ENCODE measurements at regions of chr2 and their contacts with region 1.

Region 1: GRCh38 chr2:74833418-74834233 is at the start of gene HK2:
- DNase-seq: peak; percentile 68 to 87 (median 78)
- ATAC-seq: peak; percentile 91
- H3K4me3 ChIP-seq: peak within 1 kb of the TSS; percentile 72
- H3K4me3 Mint-ChIP-seq: peak within 1 kb of the TSS; percentile 89 to 97 (median 94)
- H3K27ac ChIP-seq: peak within 1 kb of the TSS; percentile 67
- H3K27ac Mint-ChIP-seq: peak within 1 kb of the TSS; percentile 35 to 95 (median 91)
- H3K4me1 ChIP-seq: peaks cover 14 to 32% of the 10 kb centered on the region in 2 donors
- H3K4me1 Mint-ChIP-seq: peaks cover 28 to 49% (median 33%) of the 10 kb centered on the region in 7 donors
- H3K27me3 ChIP-seq: no peaks in the 10 kb centered on the region
- H3K27me3 Mint-ChIP-seq: peaks cover 0 to 7% (median 0%) of the 10 kb centered on the region in 5 donors
- total RNA-seq, gene HK2: 11.1 to 74.6 (median 17.7) TPM

Region 2: DNA sequence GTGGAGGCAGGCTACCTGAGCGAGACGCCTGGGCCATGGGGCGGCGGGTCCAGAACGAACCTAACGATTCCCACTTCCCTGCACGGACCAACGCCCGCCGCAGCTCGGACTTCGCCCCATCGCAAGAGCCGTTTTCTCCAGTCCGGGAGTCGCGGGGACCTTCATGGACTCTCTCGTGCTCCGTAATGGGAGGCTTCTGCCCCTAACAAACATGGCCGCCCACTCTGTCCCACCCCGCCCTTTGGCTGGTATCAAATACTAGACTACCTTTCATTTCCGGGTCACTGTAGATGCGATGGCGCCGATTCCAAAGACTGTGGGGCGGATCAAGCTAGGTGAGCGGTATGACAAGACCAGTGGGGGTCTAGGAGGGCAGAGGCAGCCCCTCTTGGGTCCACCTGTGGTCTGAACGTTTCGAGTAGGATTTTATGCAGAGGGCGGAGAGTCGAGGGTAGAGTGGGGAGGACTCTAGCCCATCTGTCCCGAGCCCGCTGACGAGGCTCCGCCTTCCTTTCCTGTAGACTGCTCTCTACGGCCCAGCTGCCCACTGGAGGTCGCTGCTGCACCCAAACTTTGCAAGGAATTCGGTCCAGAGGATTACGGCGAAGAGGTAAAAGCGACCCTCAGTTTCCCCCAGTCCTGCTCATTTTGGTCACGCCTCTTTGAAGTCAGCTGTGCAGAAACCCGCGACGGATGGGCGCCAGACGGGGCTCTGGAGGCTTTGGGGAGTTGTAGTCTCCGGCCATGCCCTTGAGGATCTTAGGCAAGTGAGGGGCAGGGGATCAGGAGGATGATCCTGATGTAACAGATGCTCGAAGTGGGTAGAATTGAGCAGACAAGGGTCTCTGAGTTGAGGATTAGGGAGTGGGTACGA is 350.6 kb before region 1 on chr2 and contains the starts of genes CCDC142 and TTC31:
- CTCF ChIA-PET with region 1: no interaction called
- POLR2A ChIA-PET with region 1: no interaction called
- intact Hi-C with region 1: loop called in 1 of 2 experiments (anchors 1 kb)
- DNase-seq: peak; percentile 76 to 96 (median 96)
- ATAC-seq: peak; percentile 96
- H3K4me3 ChIP-seq: peak within 1 kb of the TSS; percentile 99
- H3K4me3 Mint-ChIP-seq: peak within 1 kb of the TSS; percentile 91 to 100 (median 98)
- H3K27ac ChIP-seq: peak within 1 kb of the TSS; percentile 85
- H3K27ac Mint-ChIP-seq: peak within 1 kb of the TSS; percentile 93 to 100 (median 99)
- H3K4me1 ChIP-seq: peaks cover 22 to 26% of the 10 kb centered on the region in 2 donors
- H3K4me1 Mint-ChIP-seq: peaks cover 21 to 59% (median 41%) of the 10 kb centered on the region in 7 donors
- H3K27me3 ChIP-seq: no peaks in the 10 kb centered on the region
- H3K27me3 Mint-ChIP-seq: no peaks in the 10 kb centered on the region
- total RNA-seq, gene CCDC142: 21.4 to 75.2 (median 33.8) TPM
- total RNA-seq, gene TTC31: 35.5 to 50.4 (median 43.6) TPM

Region 3: DNA sequence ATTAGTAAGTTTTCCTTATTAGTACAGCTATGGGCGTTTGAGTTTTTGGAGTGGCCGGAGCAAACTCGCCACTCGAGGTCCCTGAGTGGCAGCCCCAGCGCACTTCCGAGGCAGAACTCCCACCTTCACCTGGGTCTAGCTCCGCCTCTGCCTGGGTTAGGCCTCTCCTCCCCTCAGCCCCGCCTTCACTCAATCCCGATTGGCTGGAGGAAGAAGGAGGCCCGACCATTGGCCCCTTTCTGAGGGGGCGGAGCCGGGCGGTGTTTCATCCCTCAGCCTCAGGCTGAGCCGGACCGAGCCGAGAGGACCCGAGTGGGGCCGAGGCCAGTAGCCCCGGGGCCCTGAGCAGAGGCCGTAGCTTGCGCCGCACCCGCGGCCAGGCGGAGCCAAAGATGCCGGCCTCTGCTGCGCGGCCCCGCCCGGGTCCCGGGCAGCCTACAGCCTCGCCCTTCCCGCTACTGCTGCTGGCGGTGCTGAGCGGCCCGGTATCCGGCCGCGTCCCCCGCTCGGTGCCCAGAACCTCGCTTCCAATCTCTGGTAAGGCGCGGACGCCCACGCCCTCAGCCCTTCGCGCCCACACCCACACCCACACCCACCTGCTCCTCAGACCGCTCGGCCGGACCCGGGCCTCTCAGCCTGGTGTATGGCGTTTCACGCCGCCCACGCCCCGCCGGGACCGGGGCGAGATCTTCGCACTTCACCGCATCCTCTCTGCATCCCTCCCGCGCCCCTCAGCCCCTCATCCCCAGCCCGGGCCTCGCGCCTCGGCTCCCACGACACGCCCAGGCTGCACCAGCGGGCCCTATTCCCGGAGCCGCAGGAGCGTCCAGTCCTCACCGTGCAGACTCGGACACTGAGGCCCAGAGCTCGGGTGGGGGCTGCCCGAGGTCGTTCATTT is 179.4 kb before region 1 on chr2 and contains the start of gene SEMA4F:
- CTCF ChIA-PET with region 1: no interaction called
- POLR2A ChIA-PET with region 1: interaction called, 4 read pairs
- intact Hi-C with region 1: loop called (anchors 5 kb)
- DNase-seq: peak; percentile 85 to 95 (median 92)
- ATAC-seq: peak; percentile 100
- H3K4me3 ChIP-seq: peak within 1 kb of the TSS; percentile 86
- H3K4me3 Mint-ChIP-seq: peak within 1 kb of the TSS; percentile 82 to 97 (median 90)
- H3K27ac ChIP-seq: peak within 1 kb of the TSS; percentile 75
- H3K27ac Mint-ChIP-seq: peak within 1 kb of the TSS in 8 of 9 donors; percentile 59 to 96 (median 85)
- H3K4me1 ChIP-seq: peaks cover 6 to 8% of the 10 kb centered on the region in 2 donors
- H3K4me1 Mint-ChIP-seq: peaks cover 12 to 34% (median 23%) of the 10 kb centered on the region in 7 donors
- H3K27me3 ChIP-seq: no peaks in the 10 kb centered on the region
- H3K27me3 Mint-ChIP-seq: peaks cover 3 to 21% (median 5%) of the 10 kb centered on the region in 5 donors
- total RNA-seq, gene SEMA4F: 5.7 to 23.6 (median 11.0) TPM

Region 4: GRCh38 chr2:74715078-74715791 is 118.4 kb before region 1 on chr2:
- CTCF ChIA-PET with region 1: interaction called, 18 read pairs
- POLR2A ChIA-PET with region 1: interaction called, 4 read pairs
- intact Hi-C with region 1: loop called (anchors 1 kb)
- DNase-seq: peak; percentile 61 to 84 (median 75)
- ATAC-seq: peak; percentile 94
- H3K4me3 ChIP-seq: peak overlapping the region; percentile 52
- H3K4me3 Mint-ChIP-seq: peak overlapping the region; percentile 82 to 98 (median 90)
- H3K27ac ChIP-seq: no peak overlapping the region
- H3K27ac Mint-ChIP-seq: peak overlapping the region in 5 of 9 donors; percentile 3 to 68 (median 21)
- H3K4me1 ChIP-seq: no peaks in the 10 kb centered on the region
- H3K4me1 Mint-ChIP-seq: peaks cover 4 to 10% (median 8%) of the 10 kb centered on the region in 7 donors
- H3K27me3 ChIP-seq: peaks cover 0 to 8% of the 10 kb centered on the region in 2 donors
- H3K27me3 Mint-ChIP-seq: peaks cover 0 to 21% (median 8%) of the 10 kb centered on the region in 5 donors

Region 5: GRCh38 chr2:74876081-74876886 is 42.7 kb after region 1 on chr2:
- CTCF ChIA-PET with region 1: interaction called, 74 read pairs
- POLR2A ChIA-PET with region 1: interaction called, 3 read pairs
- intact Hi-C with region 1: loop called (anchors 1 kb)
- DNase-seq: peak in 7 of 9 donors; percentile 36 to 80 (median 76)
- ATAC-seq: peak; percentile 74
- H3K4me3 ChIP-seq: no peak overlapping the region
- H3K4me3 Mint-ChIP-seq: no peak overlapping the region
- H3K27ac ChIP-seq: no peak overlapping the region
- H3K27ac Mint-ChIP-seq: peak overlapping the region in 6 of 9 donors; percentile 20 to 78 (median 62)
- H3K4me1 ChIP-seq: peaks cover 0 to 3% of the 10 kb centered on the region in 2 donors
- H3K4me1 Mint-ChIP-seq: peaks cover 3 to 14% (median 6%) of the 10 kb centered on the region in 7 donors
- H3K27me3 ChIP-seq: no peaks in the 10 kb centered on the region
- H3K27me3 Mint-ChIP-seq: no peaks in the 10 kb centered on the region